ENCODE measurements at regions of chr10 and their contacts with region 1.

Region 1: GRCh38 chr10:70880077-70880534 is 8.3 kb downstream of the PCBD1 start:
- DNase-seq: peak; percentile 88
- ATAC-seq: peak; percentile 97
- H3K4me3 Mint-ChIP-seq: no peak overlapping the region
- H3K27ac Mint-ChIP-seq: no peak overlapping the region
- H3K4me1 Mint-ChIP-seq: peaks cover 5% of the 10 kb centered on the region
- H3K27me3 Mint-ChIP-seq: no peaks in the 10 kb centered on the region
- CTCF ChIP-seq: peak; percentile 87

Region 2: DNA sequence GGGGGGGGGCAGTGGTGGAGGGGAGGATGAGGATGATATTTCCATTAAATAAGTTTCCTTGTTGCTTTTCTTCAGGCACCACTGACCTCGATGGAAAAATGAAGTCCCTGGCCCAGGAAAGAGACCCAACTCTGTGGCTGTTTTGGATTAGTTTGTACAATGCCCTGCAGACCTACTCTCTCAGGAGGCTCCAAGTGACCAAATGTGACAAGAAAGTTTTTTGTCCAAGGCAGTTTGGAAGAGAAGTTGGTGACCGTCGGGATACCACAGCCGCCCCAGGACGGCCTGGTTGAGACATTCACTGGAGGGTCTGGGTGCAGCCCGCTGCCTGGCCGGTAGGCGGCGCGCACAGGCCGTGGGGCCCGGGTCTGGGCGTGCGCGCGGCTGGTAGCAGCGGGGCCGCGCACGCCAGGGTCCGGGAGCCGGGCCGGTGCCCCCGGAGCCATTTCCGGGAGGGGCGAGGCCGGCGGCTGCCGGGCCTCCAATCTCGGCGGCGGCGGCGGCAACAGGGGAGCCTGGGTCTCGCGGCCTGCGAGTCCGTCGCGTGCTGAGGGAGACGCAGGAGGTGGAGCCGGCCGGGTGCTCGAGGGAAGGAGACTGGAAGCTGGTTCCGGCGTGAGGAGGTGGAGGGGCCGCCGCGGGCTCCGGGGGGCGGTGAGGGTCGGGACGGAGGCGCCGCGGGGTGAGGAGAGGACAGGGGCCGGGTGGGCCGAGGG is 64.4 kb before region 1 on chr10 and contains the start of gene SGPL1:
- CTCF ChIA-PET with region 1: interaction called, 6 read pairs
- POLR2A ChIA-PET with region 1: interaction called, 3 read pairs
- intact Hi-C with region 1: loop called (anchors 1 kb)
- DNase-seq: peak; percentile 89
- ATAC-seq: peak; percentile 93
- H3K4me3 Mint-ChIP-seq: peak within 1 kb of the TSS; percentile 78
- H3K27ac Mint-ChIP-seq: peak within 1 kb of the TSS; percentile 85
- H3K4me1 Mint-ChIP-seq: peaks cover 39% of the 10 kb centered on the region
- H3K27me3 Mint-ChIP-seq: no peaks in the 10 kb centered on the region
- CTCF ChIP-seq: peak; percentile 99
- total RNA-seq, gene SGPL1: 13.7 to 16.6 TPM